ENCODE measurements at regions of chr21 and their contacts with region 1.

Region 1: DNA sequence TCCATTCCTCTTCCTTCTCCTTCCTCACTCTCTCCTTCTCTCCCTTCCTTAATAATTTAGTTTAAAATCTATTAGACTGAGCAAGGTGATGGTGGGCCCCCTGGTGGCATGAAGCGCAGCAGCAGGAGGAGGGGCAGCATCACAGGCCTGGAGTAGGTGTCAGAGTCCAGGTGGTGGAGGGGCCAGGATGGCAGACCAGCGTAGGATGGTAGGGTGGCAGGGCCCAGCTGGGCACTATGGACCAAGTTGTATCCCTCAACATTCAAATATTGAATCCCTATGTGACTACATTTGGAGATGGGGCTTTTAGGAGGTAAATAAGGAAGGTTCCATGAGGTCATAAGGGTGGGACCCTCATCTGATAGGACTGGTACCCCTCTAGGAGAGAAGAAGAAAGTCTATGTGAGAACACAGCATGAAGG is 61.0 kb downstream of the WDR4 start:
- DNase-seq: peak; percentile 73
- H3K4me3 ChIP-seq: no peak overlapping the region
- H3K27ac ChIP-seq: no peak overlapping the region
- H3K4me1 ChIP-seq: no peaks in the 10 kb centered on the region
- H3K27me3 ChIP-seq: peaks cover 27% of the 10 kb centered on the region; the same call in 1 of the 2 replicates

Region 2: GRCh38 chr21:42164064-42164789 is 654.1 kb before region 1 on chr21:
- in situ Hi-C with region 1: loop called (anchors 25 kb)
- DNase-seq: no peak
- H3K4me3 ChIP-seq: no peak overlapping the region
- H3K27ac ChIP-seq: no peak overlapping the region
- H3K4me1 ChIP-seq: no peaks in the 10 kb centered on the region
- H3K27me3 ChIP-seq: 0 out of 2 replicates have a peak, but pooled peaks cover under 1% of the 10 kb centered on the region

Region 3: DNA sequence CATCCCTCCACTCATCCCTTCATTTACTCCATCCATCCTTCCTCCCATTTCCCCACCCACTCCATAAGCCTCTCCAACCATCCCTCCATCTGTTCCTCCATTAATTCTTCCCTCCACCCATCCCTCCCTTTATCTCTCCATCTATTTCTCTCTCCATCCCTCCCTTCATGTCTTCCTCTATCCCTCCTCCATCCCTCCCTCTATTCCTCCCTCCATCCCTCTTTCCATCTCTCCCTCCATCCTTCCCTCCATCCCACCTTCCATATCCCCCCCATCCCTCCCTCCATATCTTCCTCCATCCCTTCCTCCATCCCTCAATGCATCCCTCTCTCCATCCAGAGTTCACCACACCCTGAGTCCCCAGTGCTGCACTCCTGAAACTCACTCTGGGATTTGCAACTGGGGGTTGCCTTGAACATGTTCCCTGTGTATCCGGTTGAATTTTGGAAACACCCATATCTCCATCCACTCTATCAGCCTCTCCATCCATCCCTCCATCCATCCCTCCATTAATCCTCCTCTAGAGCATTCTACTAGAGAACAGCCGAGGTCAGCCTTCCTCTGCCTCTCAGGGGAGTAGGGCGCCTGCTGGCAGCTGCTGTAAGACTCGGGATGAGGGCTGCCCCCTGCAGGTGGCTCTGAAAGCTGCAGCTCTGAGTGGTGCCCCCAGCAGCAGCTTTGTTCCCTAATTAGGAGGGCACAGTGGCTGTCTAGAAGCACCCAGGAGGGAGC is 560.0 kb before region 1 on chr21:
- in situ Hi-C with region 1: no loop called
- DNase-seq: peak; percentile 72
- H3K4me3 ChIP-seq: no peak overlapping the region
- H3K27ac ChIP-seq: no peak overlapping the region
- H3K4me1 ChIP-seq: no peaks in the 10 kb centered on the region
- H3K27me3 ChIP-seq: peaks cover 15% of the 10 kb centered on the region

Region 4: GRCh38 chr21:42524349-42525151 is 293.8 kb before region 1 on chr21:
- in situ Hi-C with region 1: no loop called
- DNase-seq: peak; percentile 39
- H3K4me3 ChIP-seq: no peak overlapping the region
- H3K27ac ChIP-seq: no peak overlapping the region
- H3K4me1 ChIP-seq: 0 out of 2 replicates have a peak, but pooled peaks cover 5% of the 10 kb centered on the region
- H3K27me3 ChIP-seq: peaks cover 17% of the 10 kb centered on the region; the same call in 1 of the 2 replicates

Region 5: DNA sequence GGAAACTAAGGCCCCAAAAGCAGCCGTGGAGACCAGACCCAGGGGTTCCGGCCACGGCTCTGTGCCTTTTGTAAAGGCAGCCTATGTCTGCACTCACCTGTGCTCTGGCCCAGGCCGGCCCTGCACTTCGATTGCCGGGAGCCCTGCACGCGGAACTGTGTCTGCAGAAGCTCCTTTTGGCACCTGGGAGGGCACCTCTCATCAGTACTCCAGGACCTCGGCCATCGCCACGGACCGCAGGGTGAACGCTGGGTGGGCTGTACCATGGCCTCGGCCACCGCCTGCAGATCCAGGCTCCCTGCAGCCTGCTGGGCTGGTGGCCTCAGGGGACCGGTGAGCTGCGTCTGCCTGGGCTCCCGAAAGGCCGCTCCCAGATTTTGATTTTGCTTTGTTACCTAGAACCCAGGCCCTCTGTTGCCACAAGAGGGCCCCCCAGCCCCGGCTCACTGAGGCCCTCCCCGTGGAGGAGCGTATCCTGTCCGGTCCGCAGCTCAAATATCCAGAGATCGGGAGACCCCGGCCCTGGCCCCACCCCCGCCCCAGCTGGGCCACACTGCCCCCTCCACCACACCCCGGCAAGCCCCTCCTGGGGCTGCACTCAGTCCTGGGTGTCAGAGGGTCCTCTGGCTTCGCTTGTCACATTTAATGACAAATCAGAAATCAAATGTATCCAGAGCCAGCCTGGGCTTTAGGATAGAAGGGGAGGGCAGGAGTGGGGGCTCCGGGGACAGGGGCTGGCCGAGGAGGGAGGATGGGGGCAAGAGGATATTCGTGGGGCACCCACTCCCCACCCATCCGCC is 225.1 kb before region 1 on chr21:
- in situ Hi-C with region 1: loop called (anchors 5 kb)
- DNase-seq: peak; percentile 80
- H3K4me3 ChIP-seq: no peak overlapping the region
- H3K27ac ChIP-seq: no peak overlapping the region
- H3K4me1 ChIP-seq: no peaks in the 10 kb centered on the region
- H3K27me3 ChIP-seq: peaks cover 27% of the 10 kb centered on the region; the same call in 1 of the 2 replicates

Measured in GM23248 (cell line).